Esophagus muscularis mucosa (tissue), 4 donors: ENCODE measurements at regions of chr5 and their contacts with region 1.

Region 1: GRCh38 chr5:173573126-173573960 is 43.1 kb downstream of the BOD1 start:
- DNase-seq: no peak
- H3K4me3 ChIP-seq: peak overlapping the region; percentile 16 to 40 (median 24)
- H3K27ac ChIP-seq: no peak overlapping the region
- H3K4me1 ChIP-seq: peaks cover 9 to 19% (median 15%) of the 10 kb centered on the region in 4 donors
- H3K27me3 ChIP-seq: no peaks in the 10 kb centered on the region
- CTCF ChIP-seq: peak in 2 of 3 experiments; percentile 96 to 98
- EP300 ChIP-seq: no peak
- POLR2A ChIP-seq: no peak

Region 2: GRCh38 chr5:173293817-173294672 is 279.3 kb before region 1 on chr5:
- intact Hi-C with region 1: loop called (anchors 2 kb)
- DNase-seq: no peak
- H3K4me3 ChIP-seq: peak overlapping the region in 2 of 4 donors; percentile 22 to 25
- H3K27ac ChIP-seq: no peak overlapping the region
- H3K4me1 ChIP-seq: peaks cover 12 to 20% (median 19%) of the 10 kb centered on the region in 4 donors
- H3K27me3 ChIP-seq: peaks cover 0 to 9% (median 0%) of the 10 kb centered on the region in 4 donors
- CTCF ChIP-seq: peak; percentile 86 to 88 (median 87)
- EP300 ChIP-seq: no peak
- POLR2A ChIP-seq: no peak

Region 3: DNA sequence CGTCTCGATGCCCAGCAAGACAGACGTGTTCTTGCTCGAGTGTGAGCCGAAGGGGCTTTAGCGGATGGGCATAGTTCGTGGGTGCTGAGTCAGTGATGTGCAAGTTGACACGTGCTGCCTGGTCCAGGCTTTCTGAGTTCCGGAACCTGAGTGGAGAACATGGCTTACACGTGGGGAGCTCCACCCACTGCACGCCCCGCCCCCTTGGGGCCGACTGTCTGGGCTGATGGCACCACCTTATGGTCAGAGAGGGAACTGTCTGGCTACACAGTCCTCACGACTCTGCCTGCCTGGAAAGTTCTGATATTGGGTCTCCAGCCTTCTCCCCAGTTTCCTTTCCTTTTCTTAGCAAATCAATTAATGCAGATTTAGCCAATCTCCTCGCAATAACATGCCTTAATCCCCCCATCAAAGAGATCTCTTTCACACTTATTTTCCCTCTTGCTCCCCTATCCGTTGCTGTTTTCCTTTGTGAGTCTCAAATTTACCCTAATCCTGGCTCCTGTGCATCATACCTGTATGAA is 241.3 kb before region 1 on chr5:
- intact Hi-C with region 1: loop called (anchors 5 kb)
- DNase-seq: no peak
- H3K4me3 ChIP-seq: no peak overlapping the region
- H3K27ac ChIP-seq: no peak overlapping the region
- H3K4me1 ChIP-seq: peaks cover 27 to 44% (median 32%) of the 10 kb centered on the region in 4 donors
- H3K27me3 ChIP-seq: peaks cover 4 to 39% (median 9%) of the 10 kb centered on the region in 4 donors
- CTCF ChIP-seq: peak; percentile 97
- EP300 ChIP-seq: no peak
- POLR2A ChIP-seq: no peak

Region 4: DNA sequence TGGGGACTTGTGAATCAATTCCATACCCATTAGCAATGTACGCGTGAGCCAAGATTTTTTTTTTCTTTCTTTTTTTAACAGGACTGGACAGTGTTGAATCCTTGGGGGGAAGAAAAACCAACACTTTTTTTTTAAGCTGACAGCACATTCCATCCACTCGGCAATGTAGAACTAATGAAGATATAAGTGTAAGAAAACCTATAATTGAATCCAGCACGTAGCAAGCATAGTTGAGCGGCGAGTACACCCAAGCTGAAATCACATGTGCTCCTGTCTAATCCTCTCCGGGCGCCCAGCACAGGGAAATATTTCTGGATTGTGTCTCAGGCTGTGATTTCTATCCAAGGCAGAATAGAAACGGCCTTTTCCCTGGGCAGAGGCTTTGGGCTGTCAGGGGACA is 75.1 kb before region 1 on chr5:
- intact Hi-C with region 1: loop called (anchors 5 kb)
- DNase-seq: peak; percentile 93
- H3K4me3 ChIP-seq: no peak overlapping the region
- H3K27ac ChIP-seq: peak overlapping the region; percentile 87 to 92 (median 92)
- H3K4me1 ChIP-seq: peaks cover 47 to 93% (median 79%) of the 10 kb centered on the region in 4 donors
- H3K27me3 ChIP-seq: no peaks in the 10 kb centered on the region
- CTCF ChIP-seq: no peak
- EP300 ChIP-seq: no peak
- POLR2A ChIP-seq: no peak